ENCODE measurements at regions of chr7 and their contacts with region 1.

Region 1: GRCh38 chr7:55271069-55271626 is 94.0 kb upstream of the LANCL2 start:
- DNase-seq: no peak

Region 2: GRCh38 chr7:55237156-55237893 is 33.8 kb before region 1 on chr7:
- intact Hi-C with region 1: no loop called
- DNase-seq: peak in 1 of 42 donors; percentile 30

Region 3: GRCh38 chr7:55409482-55410225 is 138.5 kb after region 1 on chr7:
- intact Hi-C with region 1: loop called (anchors 5 kb)
- DNase-seq: no peak

Measured in head of caudate nucleus (tissue), 42 donors.